T-cell (primary cell): ENCODE measurements at regions of chr13 and their contacts with region 1.

Region 1: GRCh38 chr13:102596147-102597028 is at the start of gene TPP2:
- DNase-seq: peak; percentile 89 to 99 (median 96)
- ATAC-seq: peak; percentile 83 to 86 (median 86)
- H3K4me3 ChIP-seq: peak within 1 kb of the TSS; percentile 97
- H3K4me3 Mint-ChIP-seq: peak within 1 kb of the TSS; percentile 92 to 99 (median 99)
- H3K27ac ChIP-seq: peak within 1 kb of the TSS; percentile 100
- H3K27ac Mint-ChIP-seq: peak within 1 kb of the TSS; percentile 100
- H3K4me1 ChIP-seq: peaks cover 37 to 42% of the 10 kb centered on the region in 2 experiments
- H3K4me1 Mint-ChIP-seq: peaks cover 69 to 70% (median 69%) of the 10 kb centered on the region in 3 donors
- H3K27me3 ChIP-seq: no peaks in the 10 kb centered on the region
- H3K27me3 Mint-ChIP-seq: no peaks in the 10 kb centered on the region
- total RNA-seq, gene TPP2: 111 to 135 (median 115) TPM

Region 2: DNA sequence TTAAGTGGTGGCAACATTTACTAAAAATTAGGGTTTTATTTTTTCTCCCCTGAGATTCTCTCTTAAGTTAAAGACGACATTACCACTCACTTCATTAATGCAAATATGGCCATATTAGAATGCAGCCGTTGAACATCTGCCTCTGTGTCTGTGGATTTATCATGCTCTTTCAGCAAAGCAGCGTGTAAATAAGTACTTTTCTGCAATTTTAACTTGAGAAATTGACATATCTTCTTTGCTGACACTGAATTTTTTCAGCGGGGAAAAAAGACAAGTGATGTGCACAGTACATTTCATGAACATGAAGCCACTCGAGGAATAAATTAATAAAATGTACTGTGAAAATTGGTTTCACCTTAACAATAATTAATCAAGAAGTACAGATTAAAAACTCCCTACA is 737.5 kb before region 1 on chr13:
- CTCF ChIA-PET with region 1: no interaction called
- POLR2A ChIA-PET with region 1: no interaction called
- DNase-seq: no peak
- ATAC-seq: no peak
- H3K4me3 ChIP-seq: no peak overlapping the region
- H3K4me3 Mint-ChIP-seq: no peak overlapping the region
- H3K27ac ChIP-seq: no peak overlapping the region
- H3K27ac Mint-ChIP-seq: no peak overlapping the region
- H3K4me1 ChIP-seq: no peaks in the 10 kb centered on the region
- H3K4me1 Mint-ChIP-seq: no peaks in the 10 kb centered on the region
- H3K27me3 ChIP-seq: no peaks in the 10 kb centered on the region
- H3K27me3 Mint-ChIP-seq: peaks cover 3 to 10% of the 10 kb centered on the region in 2 donors

Region 3: DNA sequence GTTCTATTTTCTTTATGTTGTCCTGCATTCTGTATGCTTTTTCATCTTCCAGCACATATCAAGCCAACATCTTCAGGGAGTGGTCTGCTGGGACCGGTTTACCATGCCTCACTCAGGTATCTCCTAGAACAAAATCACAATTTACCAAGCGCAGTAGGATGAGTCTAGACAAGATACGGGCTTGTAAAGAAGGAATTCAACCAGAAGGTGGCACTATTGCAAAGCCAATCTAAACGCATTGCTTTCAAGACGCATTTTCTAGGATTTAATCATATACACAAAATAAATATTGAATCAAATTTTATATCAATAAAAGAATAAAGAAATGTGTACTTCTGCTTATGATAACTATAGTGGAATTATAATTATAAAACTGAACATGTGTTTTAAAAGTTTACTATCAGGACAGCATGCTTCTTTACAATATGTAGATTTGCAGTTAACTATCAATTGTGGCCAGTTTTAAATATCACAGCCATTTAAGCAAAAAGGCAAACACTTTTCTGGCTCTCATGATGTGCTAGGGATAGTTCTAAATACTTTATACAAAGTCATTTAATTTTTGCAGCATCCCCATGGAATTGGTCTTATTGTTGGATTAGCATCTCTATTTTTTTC is 15.7 kb before region 1 on chr13:
- CTCF ChIA-PET with region 1: interaction called, 10 to 12 read pairs
- POLR2A ChIA-PET with region 1: interaction called, 3 to 4 read pairs
- DNase-seq: peak in 16 of 35 experiments; percentile 9 to 83 (median 28)
- ATAC-seq: peak; percentile 60 to 81 (median 71)
- H3K4me3 ChIP-seq: no peak overlapping the region
- H3K4me3 Mint-ChIP-seq: no peak overlapping the region
- H3K27ac ChIP-seq: no peak overlapping the region
- H3K27ac Mint-ChIP-seq: no peak overlapping the region
- H3K4me1 ChIP-seq: peaks cover 0 to 5% of the 10 kb centered on the region in 2 experiments
- H3K4me1 Mint-ChIP-seq: peaks cover 11 to 15% (median 15%) of the 10 kb centered on the region in 3 donors
- H3K27me3 ChIP-seq: peaks cover 0 to 12% of the 10 kb centered on the region in 2 experiments
- H3K27me3 Mint-ChIP-seq: peaks cover 5 to 7% of the 10 kb centered on the region in 2 donors

Region 4: GRCh38 chr13:102620516-102620915 is 24.1 kb after region 1 on chr13:
- CTCF ChIA-PET with region 1: interaction called, 7 to 9 read pairs
- POLR2A ChIA-PET with region 1: interaction called, 3 to 12 read pairs
- DNase-seq: no peak
- ATAC-seq: no peak
- H3K4me3 ChIP-seq: no peak overlapping the region
- H3K4me3 Mint-ChIP-seq: no peak overlapping the region
- H3K27ac ChIP-seq: no peak overlapping the region
- H3K27ac Mint-ChIP-seq: no peak overlapping the region
- H3K4me1 ChIP-seq: no peaks in the 10 kb centered on the region
- H3K4me1 Mint-ChIP-seq: peaks cover 4 to 10% (median 8%) of the 10 kb centered on the region in 3 donors
- H3K27me3 ChIP-seq: no peaks in the 10 kb centered on the region
- H3K27me3 Mint-ChIP-seq: no peaks in the 10 kb centered on the region

Region 5: GRCh38 chr13:102638741-102639140 is 42.4 kb after region 1 on chr13:
- CTCF ChIA-PET with region 1: interaction called in 1 of 2 experiments, 12 read pairs
- POLR2A ChIA-PET with region 1: interaction called, 3 to 8 read pairs
- DNase-seq: no peak
- ATAC-seq: no peak
- H3K4me3 ChIP-seq: no peak overlapping the region
- H3K4me3 Mint-ChIP-seq: no peak overlapping the region
- H3K27ac ChIP-seq: no peak overlapping the region
- H3K27ac Mint-ChIP-seq: no peak overlapping the region
- H3K4me1 ChIP-seq: no peaks in the 10 kb centered on the region
- H3K4me1 Mint-ChIP-seq: peaks cover 0 to 6% (median 5%) of the 10 kb centered on the region in 3 donors
- H3K27me3 ChIP-seq: no peaks in the 10 kb centered on the region
- H3K27me3 Mint-ChIP-seq: no peaks in the 10 kb centered on the region